ENCODE measurements at regions of chr3 and their contacts with region 1.

Region 1: DNA sequence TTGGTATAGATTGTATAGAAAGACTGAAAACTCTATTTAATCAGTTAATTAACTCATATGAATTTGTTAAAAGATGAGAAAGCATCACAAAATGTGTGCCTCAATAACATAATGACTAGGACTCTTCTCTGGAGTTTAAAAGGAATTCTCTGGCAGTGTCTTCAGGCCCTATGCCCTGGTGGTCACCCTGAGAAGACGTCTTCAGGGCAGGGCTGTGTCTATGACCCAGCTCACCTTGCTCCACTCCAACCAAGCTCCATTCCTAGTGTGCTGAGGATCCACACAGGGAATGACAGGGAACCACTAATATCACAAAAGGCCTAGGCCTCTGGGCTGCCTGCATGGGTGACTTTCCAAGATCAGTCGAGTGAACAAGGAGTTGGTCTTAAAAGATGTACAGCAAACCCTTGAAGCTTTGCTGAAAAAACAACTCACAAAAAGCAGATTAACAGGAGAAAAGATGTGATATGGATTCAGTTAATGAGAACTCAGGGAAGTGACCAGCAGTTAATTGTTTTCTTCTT is 156.6 kb downstream of the SNRK start:
- DNase-seq: no peak
- H3K4me3 ChIP-seq: no peak overlapping the region
- H3K27ac ChIP-seq: no peak overlapping the region
- H3K4me1 ChIP-seq: no peaks in the 10 kb centered on the region
- H3K27me3 ChIP-seq: no peaks in the 10 kb centered on the region
- CTCF ChIP-seq: no peak

Region 2: DNA sequence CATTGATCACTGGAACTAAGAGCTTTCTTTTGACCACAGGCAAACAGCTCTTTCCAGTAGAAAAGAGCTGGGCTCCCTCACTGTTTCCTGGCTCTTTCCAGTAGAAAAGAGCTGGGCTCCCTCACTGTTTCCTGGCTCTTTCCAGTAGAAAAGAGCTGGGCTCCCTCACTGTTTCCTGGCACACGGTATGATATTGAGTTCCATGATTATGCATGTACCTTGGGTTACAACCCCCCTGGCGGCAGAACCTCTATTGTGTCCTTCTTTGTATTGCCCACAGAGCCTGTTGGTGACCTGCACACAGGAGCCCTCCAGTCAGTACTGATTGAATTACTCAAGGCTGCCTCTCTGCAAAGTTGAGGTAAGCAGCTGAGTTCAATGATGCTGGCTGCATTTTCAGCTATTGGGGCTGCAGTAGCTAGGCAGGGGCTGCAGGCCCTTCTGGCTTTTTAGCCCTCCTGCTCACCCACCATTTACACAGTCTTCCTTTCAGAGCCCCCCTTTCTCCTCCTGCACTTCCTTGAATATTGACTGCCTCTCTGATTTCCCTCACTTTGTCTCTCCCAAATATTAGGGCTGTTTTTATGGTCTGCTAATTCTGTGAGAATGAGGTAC is 623.5 kb before region 1 on chr3:
- CTCF ChIA-PET with region 1: no interaction called
- POLR2A ChIA-PET with region 1: no interaction called
- intact Hi-C with region 1: no loop called
- DNase-seq: peak; percentile 5
- H3K4me3 ChIP-seq: no peak overlapping the region
- H3K27ac ChIP-seq: no peak overlapping the region
- H3K4me1 ChIP-seq: no peaks in the 10 kb centered on the region
- H3K27me3 ChIP-seq: peaks cover 4% of the 10 kb centered on the region
- CTCF ChIP-seq: no peak

Region 3: GRCh38 chr3:43394041-43394554 is 48.8 kb before region 1 on chr3:
- CTCF ChIA-PET with region 1: no interaction called
- POLR2A ChIA-PET with region 1: interaction called, 10 read pairs
- intact Hi-C with region 1: no loop called
- DNase-seq: no peak
- H3K4me3 ChIP-seq: no peak overlapping the region
- H3K27ac ChIP-seq: no peak overlapping the region
- H3K4me1 ChIP-seq: no peaks in the 10 kb centered on the region
- H3K27me3 ChIP-seq: no peaks in the 10 kb centered on the region
- CTCF ChIP-seq: no peak